ENCODE measurements at regions of chr6 and their contacts with region 1.

Region 1: DNA sequence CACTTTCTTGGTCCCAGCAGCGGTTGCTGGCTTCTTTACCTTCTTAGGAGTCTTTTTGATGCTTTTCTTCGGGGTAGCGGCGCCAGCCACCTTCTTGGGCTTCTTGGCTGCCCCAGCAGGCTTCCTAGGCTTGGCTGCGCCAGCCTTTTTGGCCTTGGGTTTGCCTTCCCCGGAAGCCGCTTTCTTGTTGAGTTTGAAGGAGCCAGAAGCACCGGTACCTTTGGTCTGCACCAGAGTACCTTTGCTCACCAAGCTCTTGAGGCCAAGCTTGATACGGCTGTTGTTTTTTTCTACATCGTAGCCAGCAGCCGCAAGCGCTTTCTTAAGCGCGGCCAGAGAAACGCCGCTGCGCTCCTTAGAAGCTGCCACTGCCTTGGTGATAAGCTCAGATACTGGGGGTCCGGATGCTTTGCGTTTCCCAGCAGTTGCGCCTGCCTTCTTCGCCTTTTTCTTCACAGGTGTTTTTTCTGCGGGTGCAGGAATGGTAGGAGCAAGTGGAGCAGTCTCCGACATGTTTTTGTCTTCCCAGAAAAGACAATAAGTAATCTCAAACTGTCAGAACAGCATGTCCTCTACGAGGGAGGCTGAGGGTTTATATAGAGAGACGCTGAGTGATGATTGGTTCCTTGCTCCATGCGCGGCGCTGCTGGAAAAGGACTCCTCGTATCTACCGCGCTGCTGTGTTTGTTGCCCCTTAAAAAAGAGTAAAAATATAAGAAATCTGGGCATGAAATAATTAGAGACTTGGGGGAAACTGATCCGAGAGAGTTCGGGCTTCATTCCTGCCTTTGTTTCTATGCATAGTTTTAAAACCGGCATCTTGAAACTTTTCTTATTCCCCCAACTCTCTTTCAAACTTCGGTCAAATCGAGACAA is 130.3 kb upstream of the BTN3A2 start:
- DNase-seq: peak; percentile 86
- ATAC-seq: peak; percentile 65
- H3K4me3 Mint-ChIP-seq: peak overlapping the region; percentile 75
- H3K27ac Mint-ChIP-seq: peak overlapping the region; percentile 99
- H3K4me1 Mint-ChIP-seq: peaks cover 24% of the 10 kb centered on the region
- H3K27me3 Mint-ChIP-seq: peaks cover 5% of the 10 kb centered on the region
- CTCF ChIP-seq: no peak

Region 2: DNA sequence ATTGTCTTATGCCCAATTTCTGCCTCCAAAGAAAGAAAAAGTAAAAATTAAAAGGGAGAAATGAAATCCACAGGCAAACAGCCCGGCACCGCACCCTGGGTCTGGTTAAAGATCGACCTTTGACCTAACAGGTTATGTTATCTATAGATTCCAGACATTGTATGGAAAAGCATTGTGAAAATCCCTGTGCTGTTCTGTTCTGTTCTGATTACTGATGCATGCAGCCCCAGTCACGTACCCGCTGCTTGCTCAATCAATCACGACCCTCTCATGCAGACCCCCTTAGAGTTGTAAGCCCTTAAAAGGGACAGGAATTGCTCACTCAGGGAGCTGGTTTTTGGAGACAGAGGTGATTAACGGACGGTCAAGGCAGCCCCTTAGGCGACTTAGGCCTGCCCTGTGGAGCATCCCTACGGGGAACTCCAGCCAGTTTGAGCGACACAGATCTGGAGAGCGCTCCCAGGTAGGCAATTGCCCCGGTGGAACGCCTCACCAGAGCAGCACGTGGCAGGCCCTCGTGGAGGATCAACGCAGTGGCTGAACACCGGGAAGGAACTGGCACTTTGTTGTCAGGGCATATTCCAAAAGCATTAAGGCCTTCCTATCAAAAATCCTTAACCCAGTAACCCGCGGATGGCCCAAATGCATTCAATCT is 159.5 kb before region 1 on chr6:
- CTCF ChIA-PET with region 1: no interaction called
- POLR2A ChIA-PET with region 1: no interaction called
- intact Hi-C with region 1: no loop called
- DNase-seq: no peak
- ATAC-seq: no peak
- H3K4me3 Mint-ChIP-seq: no peak overlapping the region
- H3K27ac Mint-ChIP-seq: no peak overlapping the region
- H3K4me1 Mint-ChIP-seq: peaks cover 6% of the 10 kb centered on the region
- H3K27me3 Mint-ChIP-seq: peaks cover 3% of the 10 kb centered on the region
- CTCF ChIP-seq: no peak

Region 3: DNA sequence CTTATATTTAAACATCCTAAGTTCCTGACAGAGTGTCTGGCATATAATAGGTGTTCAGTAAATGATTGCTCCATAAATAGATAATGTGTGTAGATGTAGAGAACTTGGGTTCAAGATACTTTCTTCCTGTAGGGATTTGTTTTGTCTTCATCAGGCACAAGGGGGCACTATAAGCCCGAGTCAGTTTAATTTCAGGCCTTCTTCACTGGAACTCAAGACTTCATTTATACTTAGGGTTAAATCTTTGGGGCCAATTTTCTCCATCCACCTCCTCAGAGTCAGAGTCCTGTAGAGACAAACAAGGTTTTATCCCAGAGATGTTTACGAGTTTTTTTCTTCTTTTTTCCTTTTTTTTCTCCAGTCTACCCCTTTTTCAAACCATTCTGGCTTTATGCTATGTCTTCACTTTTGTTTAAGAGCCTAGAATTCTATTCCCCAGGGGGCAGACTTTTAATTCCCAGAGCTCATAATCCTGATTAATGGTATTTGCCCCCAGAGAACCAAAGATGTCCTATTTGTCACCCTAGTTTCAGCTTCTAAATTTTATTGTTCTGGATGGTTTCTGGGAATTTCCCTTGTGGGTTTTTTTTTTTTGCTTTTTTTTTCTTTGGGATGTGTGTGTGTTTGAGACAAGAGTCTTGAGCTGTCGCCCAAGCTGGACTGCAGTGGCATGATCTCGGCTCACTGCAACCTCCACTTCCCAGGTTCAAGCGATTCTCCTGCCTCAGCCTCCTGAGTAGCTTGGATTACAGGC is 59.1 kb before region 1 on chr6:
- CTCF ChIA-PET with region 1: interaction called, 4 read pairs
- POLR2A ChIA-PET with region 1: interaction called, 13 read pairs
- intact Hi-C with region 1: no loop called
- DNase-seq: peak; percentile 72
- ATAC-seq: peak; percentile 17
- H3K4me3 Mint-ChIP-seq: peak overlapping the region; percentile 46
- H3K27ac Mint-ChIP-seq: peak overlapping the region; percentile 63
- H3K4me1 Mint-ChIP-seq: peaks cover 38% of the 10 kb centered on the region
- H3K27me3 Mint-ChIP-seq: no peaks in the 10 kb centered on the region
- CTCF ChIP-seq: peak; percentile 86

Region 4: DNA sequence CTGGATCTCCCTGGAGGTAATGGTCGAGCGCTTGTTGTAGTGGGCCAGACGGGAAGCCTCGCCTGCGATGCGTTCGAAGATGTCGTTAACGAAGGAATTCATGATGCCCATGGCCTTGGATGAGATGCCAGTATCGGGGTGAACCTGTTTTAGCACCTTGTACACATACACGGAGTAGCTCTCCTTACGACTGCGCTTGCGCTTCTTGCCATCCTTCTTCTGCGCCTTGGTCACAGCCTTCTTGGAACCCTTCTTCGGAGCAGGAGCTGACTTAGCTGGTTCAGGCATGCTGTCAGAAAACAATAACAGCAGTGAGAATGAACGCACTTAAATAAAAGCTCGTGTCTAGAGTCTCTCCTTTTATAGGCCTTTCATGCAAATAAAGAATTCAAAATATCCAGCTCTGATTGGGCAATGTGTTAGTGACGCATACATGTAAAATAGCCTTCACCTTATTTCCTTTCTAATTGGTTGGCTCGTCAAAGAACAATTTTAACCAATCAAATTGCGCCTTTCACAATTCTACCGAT is 18.2 kb before region 1 on chr6:
- CTCF ChIA-PET with region 1: interaction called, 12 read pairs
- POLR2A ChIA-PET with region 1: interaction called, 237 read pairs
- intact Hi-C with region 1: loop called (anchors 2 kb)
- DNase-seq: peak; percentile 87
- ATAC-seq: peak; percentile 80
- H3K4me3 Mint-ChIP-seq: no peak overlapping the region
- H3K27ac Mint-ChIP-seq: no peak overlapping the region
- H3K4me1 Mint-ChIP-seq: peaks cover 11% of the 10 kb centered on the region
- H3K27me3 Mint-ChIP-seq: no peaks in the 10 kb centered on the region
- CTCF ChIP-seq: no peak

Region 5: DNA sequence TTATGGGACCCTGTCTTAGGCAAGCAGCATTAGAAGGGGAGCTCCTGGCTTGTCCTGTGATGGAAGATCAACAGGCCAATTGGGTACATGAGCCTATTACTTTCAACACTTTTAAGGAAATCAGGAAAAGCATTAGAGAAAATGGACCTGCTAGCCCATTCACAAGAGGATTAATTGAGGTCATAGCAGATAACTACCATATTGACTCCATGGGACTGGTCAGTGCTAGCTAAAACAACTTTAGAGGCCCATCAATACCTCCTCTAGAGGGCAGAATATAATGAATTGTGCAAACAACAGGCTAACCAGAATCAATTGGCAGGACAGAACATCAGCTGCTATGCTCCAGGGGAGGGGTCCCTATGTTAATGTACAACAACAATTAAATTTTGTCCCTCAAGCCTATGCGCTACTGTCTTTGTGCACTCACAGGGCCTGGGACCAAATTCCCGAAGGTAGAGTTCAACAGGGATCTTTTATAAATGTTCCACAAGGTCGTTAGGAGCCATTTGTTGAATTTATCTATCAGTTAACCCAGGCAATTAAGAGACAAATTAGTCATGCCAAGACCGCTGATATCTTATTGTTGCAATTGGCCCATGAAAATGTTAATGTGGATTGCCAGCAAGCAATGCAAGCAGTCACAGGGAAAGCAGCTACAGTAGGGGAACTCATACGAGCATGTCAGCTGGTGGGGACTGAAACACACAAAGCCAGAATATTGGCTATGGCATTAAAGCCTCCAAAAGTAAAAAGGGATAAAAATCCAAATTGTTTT is 23.7 kb after region 1 on chr6:
- CTCF ChIA-PET with region 1: interaction called, 4 read pairs
- POLR2A ChIA-PET with region 1: interaction called, 11 read pairs
- intact Hi-C with region 1: no loop called
- DNase-seq: no peak
- ATAC-seq: no peak
- H3K4me3 Mint-ChIP-seq: no peak overlapping the region
- H3K27ac Mint-ChIP-seq: no peak overlapping the region
- H3K4me1 Mint-ChIP-seq: peaks cover 5% of the 10 kb centered on the region
- H3K27me3 Mint-ChIP-seq: no peaks in the 10 kb centered on the region
- CTCF ChIP-seq: peak; percentile 18

Region 6: DNA sequence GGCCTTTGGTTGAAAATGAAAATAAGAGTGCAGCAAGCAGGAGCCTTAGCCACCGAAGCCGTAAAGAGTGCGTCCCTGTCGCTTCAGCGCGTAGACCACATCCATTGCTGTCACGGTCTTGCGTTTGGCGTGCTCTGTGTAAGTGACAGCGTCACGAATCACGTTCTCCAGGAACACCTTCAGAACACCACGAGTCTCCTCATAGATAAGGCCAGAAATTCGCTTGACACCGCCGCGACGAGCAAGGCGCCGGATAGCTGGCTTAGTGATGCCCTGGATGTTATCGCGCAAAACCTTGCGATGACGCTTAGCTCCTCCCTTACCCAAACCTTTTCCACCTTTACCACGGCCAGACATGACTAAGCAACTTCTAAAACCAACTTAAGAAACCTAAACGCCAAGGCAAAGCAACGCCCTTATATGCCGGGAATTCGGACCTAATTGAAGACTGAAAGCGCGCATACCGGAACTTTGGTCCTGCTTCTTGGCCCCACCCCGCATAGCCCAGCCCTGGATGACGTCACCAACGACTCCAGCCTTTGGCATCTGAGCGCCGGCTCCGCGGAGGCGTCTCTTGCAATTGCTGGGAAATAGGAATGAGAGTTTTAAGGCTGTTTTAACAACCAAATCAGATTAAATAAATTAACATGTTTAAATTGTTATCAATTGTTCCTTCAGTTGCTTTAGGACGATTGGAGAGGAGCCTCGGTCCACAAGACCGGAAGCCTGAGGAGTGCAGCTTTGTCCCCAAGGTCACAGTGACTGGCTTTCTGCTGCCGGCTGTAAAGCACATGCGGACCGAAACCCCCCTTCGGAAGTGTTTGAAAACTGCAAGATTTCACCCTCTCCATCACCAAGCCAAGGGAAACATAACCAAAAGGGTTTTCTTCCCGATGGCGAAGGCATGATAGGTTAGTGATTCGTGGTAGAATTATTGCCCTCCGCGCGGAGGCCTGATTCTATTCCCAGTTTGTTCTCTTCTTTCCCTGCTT is 50.8 kb after region 1 on chr6:
- CTCF ChIA-PET with region 1: no interaction called
- POLR2A ChIA-PET with region 1: interaction called, 62 read pairs
- intact Hi-C with region 1: no loop called
- DNase-seq: peak; percentile 99
- ATAC-seq: peak; percentile 79
- H3K4me3 Mint-ChIP-seq: peak overlapping the region; percentile 88
- H3K27ac Mint-ChIP-seq: peak overlapping the region; percentile 100
- H3K4me1 Mint-ChIP-seq: peaks cover 15% of the 10 kb centered on the region
- H3K27me3 Mint-ChIP-seq: peaks cover 2% of the 10 kb centered on the region
- CTCF ChIP-seq: no peak